AG04450 (cell line): ENCODE measurements at regions of chr10 and their contacts with region 1.

Region 1: GRCh38 chr10:14822879-14823755 is 14.7 kb downstream of the CDNF start:
- DNase-seq: peak; percentile 20
- H3K4me3 ChIP-seq: no peak overlapping the region
- H3K27ac ChIP-seq: no peak overlapping the region
- H3K27me3 ChIP-seq: no peaks in the 10 kb centered on the region
- CTCF ChIP-seq: peak; percentile 85

Region 2: DNA sequence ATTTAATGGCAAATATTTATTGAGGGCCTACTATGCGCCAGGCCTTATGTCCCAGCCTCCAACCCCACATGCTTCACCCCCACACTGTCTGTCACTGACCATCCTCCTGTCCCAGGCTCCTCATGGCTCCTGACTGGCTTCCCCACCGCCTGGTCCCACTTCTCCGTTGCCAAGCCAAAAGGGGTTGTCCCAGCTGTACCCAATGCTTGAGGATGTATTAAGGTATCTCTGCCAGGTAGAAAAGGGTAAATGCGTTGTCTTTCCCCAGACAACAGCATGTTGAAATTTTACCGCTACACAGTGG is 323.6 kb before region 1 on chr10:
- CTCF ChIA-PET with region 1: interaction called, 43 read pairs
- POLR2A ChIA-PET with region 1: no interaction called
- DNase-seq: no peak
- H3K4me3 ChIP-seq: no peak overlapping the region
- H3K27ac ChIP-seq: no peak overlapping the region
- H3K27me3 ChIP-seq: no peaks in the 10 kb centered on the region
- CTCF ChIP-seq: no peak